AG04450 (cell line): ENCODE measurements at regions of chr3 and their contacts with region 1.

Region 1: DNA sequence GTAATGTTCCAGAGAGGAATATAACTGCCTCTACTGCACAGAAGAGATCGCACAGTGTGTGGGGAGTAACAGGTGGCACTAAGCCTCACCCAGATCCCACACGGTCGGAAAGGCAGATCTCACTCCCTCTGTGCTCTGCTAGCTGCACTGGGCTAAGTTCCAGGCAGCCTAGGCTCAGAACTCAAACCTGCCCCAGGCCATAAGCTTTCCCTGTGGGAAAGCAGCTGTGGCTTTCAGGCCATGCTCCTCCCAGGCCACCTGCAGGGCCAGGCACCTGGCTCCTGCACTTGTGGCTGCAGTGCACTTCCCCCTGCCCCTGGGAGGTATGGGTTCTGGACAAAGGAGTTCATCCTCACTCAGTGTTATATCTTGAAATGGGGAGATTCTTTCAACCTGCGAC is 27.5 kb downstream of the PCCB start:
- DNase-seq: no peak
- H3K4me3 ChIP-seq: no peak overlapping the region
- H3K27ac ChIP-seq: no peak overlapping the region
- H3K27me3 ChIP-seq: no peaks in the 10 kb centered on the region
- CTCF ChIP-seq: no peak

Region 2: DNA sequence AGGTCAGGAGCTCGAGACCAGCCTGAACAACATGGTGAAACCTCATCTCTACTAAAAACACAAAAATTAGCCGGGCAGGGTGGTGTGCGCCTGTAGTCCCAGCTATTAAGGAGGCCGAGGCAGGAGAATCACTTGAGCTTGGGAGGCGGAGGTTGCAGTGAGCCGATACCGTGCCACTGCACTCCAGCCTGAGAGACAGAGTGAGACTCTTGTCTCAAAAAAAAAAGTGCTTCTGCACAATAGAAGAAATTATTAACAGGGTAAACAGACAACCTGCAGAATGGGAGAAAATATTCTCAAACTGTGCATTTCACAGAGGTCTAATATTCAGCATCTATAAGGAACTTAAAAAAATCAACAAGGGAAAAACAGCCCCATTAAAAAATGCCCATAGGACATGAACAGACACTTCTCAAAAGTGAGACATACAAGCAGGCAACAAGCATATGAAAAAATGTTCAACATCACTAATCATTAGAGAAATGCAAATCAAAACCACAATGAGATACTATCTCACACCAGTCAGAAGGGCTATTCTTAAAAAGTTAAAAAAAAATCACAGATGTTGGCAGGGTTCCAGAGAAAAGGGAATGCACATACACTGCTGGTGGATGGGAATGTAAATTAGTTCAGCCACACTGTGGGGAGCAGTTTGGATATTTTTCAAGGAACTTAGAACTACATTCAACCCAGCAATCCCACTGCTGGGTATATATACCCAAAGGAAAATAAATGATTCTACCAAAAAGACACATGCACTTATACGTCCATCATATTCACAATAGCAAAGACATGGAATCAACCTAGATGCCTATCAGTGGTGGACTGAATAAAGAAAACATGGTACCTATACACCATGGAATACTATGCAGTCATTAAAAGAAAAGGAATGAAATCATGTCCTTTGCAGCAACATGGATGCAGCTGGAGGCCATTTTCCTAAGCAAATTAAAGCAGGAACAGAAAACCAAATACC is 157.0 kb before region 1 on chr3:
- CTCF ChIA-PET with region 1: interaction called, 13 read pairs
- POLR2A ChIA-PET with region 1: no interaction called
- DNase-seq: no peak
- H3K4me3 ChIP-seq: no peak overlapping the region
- H3K27ac ChIP-seq: no peak overlapping the region
- H3K27me3 ChIP-seq: no peaks in the 10 kb centered on the region
- CTCF ChIP-seq: no peak

Region 3: DNA sequence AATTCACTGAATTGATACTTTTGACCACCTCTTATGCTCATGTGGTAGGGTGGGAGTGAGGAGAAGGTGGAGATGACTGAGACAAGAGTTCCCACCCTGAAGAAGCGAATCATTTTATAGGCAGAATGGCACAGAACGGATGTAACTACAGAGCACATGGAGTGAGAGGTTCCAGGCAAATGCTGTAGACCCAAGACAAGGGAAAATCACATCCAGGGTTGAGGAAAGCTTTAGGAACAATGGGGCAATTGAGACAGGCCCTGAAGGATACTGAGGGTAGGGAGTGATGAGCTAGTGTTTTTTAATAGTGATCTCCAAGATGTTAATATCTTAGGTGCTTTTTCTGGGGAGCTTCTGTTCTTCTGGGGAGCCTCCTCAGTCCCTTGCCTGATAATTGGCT is 19.4 kb before region 1 on chr3:
- CTCF ChIA-PET with region 1: no interaction called
- POLR2A ChIA-PET with region 1: no interaction called
- DNase-seq: no peak
- H3K4me3 ChIP-seq: no peak overlapping the region
- H3K27ac ChIP-seq: no peak overlapping the region
- H3K27me3 ChIP-seq: no peaks in the 10 kb centered on the region
- CTCF ChIP-seq: no peak